ENCODE measurements at regions of chrX and their contacts with region 1.

Region 1: GRCh38 chrX:19990556-19991349 is at the start of gene BCLAF3:
- DNase-seq: peak; percentile 95
- H3K4me3 Mint-ChIP-seq: peak within 1 kb of the TSS; percentile 71
- H3K27ac Mint-ChIP-seq: peak within 1 kb of the TSS; percentile 36
- H3K4me1 Mint-ChIP-seq: peaks cover 9% of the 10 kb centered on the region
- H3K27me3 Mint-ChIP-seq: peaks cover 10% of the 10 kb centered on the region
- CTCF ChIP-seq: peak; percentile 86
- total RNA-seq, gene BCLAF3: 11.1 and 12.7 TPM in 2 replicates

Region 2: DNA sequence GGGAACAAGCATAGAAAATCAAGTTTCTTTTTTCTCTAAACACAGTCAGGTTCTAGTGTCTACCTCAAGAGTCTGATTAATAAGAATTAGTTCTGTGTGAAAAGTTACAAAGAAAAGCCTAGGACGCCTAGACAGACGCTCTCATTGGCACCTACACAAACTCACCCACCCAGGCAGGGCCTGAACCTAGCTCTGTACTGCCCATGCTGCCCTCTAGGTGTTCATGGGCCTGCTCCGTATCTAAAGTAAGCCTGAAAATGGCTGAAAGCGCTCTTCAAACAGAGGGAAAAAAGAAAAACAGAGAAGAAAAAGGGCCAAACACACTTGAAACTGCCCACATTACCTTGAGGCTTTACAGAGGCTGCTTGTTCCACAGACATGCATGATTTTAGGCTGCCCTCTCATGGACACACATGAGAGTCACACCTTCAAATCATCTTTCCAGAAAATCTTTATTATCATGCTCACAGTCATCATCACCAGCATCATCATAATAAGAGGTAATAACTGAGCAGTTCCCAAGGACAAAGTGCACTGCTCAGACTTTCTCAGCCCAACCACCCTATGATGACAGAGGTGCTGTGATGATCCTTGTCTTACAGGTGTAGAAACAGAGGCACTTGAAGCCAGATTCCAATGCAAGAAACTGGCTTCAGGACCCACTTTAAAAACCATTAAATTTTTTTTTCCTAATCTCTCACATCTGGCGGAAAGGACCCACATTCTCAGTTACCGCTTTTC is 76.4 kb after region 1 on chrX:
- CTCF ChIA-PET with region 1: interaction called, 6 read pairs
- intact Hi-C with region 1: loop called (anchors 2 kb)
- DNase-seq: peak; percentile 36
- H3K4me3 Mint-ChIP-seq: no peak overlapping the region
- H3K27ac Mint-ChIP-seq: peak overlapping the region; percentile 67
- H3K4me1 Mint-ChIP-seq: peaks cover 31% of the 10 kb centered on the region
- H3K27me3 Mint-ChIP-seq: no peaks in the 10 kb centered on the region
- CTCF ChIP-seq: peak; percentile 32